Lower leg skin (tissue), 4 donors: ENCODE measurements at regions of chrX and their contacts with region 1.

Region 1: DNA sequence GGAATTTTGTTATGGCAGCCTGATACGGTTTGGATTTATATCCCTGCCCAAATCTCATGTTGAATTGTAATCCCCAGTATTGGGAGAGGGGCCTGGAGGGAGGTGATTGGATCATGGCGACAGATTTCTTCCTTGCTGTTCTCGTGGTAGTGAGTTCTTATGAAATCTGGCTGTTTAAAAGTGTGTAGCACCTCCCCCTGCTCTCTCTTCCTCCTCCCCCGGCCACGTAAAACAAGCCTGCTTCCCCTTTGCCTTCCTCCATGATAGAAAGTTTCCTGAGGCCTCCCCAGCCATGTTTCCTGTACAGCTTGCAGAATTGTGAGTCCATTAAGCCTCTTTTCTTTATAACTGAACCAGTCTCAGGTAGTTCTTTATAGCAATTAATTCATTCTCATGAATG is 37.9 kb downstream of the SUPT20HL2 start:
- DNase-seq: peak in 1 of 2 donors; percentile 17
- H3K4me3 ChIP-seq: no peak overlapping the region
- CTCF ChIP-seq: no peak
- POLR2A ChIP-seq: no peak

Region 2: DNA sequence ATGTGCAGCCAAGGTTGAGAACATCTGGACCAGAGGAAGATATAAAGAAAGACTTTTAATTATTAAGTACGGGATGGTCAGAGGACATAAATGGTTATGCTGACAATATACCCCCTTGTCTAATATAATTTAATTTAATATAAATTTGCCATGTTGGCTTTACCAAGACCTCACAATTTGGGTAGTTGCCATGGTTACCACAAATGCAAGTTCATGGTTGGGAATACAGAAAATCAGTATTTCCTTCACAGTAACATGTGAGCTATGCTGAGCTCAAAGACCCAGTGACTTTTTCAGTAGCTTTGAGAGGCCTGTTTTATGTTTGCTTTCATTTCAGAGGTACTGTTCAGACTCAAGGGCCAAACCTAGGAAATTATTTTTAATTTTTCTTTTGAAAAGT is 1780.3 kb before region 1 on chrX:
- intact Hi-C with region 1: loop called (anchors 5 kb)
- DNase-seq: no peak
- H3K4me3 ChIP-seq: no peak overlapping the region
- CTCF ChIP-seq: no peak
- POLR2A ChIP-seq: no peak